Activated T-helper 1 cell treated with anti-CD3 and anti-CD28 coated beads, Interleukin-12 subunit alpha, Interleukin-12 subunit beta, Interleukin-2, Interleukin-4 antibody, amounts not matched to agents 30 ng/mL and 10 ng/mL and 1 ng/mL, durations not matched to agents 14 hours and 24 hours and 36 hours (primary cell): ENCODE measurements at regions of chr7 and their contacts with region 1.

Region 1: DNA sequence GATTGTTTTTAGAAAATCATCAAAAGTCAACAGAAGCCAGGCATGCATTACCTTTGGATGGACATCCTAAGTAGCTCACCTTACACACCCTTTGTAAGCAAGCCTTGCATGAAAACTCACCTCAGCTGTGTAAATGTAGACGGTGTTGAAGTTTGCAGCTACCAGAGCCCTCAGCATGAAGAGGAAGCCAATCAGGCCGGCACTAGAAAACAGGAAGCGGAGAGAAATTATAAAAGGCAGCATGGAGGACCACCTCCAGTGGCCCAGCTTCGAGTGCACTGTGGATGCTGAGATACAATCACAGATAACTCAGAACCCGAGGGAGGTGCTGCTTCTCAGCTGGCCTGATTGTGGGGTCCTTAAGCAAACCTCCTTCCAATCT is 75.3 kb downstream of the SVOPL start:
- DNase-seq: no peak
- H3K4me3 Mint-ChIP-seq: no peak overlapping the region
- H3K27ac Mint-ChIP-seq: no peak overlapping the region
- H3K4me1 Mint-ChIP-seq: peaks cover 32% of the 10 kb centered on the region
- H3K27me3 Mint-ChIP-seq: peaks cover 7% of the 10 kb centered on the region

Region 2: GRCh38 chr7:138667535-138668228 is 41.8 kb after region 1 on chr7:
- intact Hi-C with region 1: loop called (anchors 1 kb)
- DNase-seq: no peak
- H3K4me3 Mint-ChIP-seq: no peak overlapping the region
- H3K27ac Mint-ChIP-seq: peak overlapping the region; percentile 7
- H3K4me1 Mint-ChIP-seq: peaks cover 28% of the 10 kb centered on the region
- H3K27me3 Mint-ChIP-seq: peaks cover 23% of the 10 kb centered on the region